ENCODE measurements at regions of chr1 and their contacts with region 1.

Region 1: GRCh38 chr1:28248283-28249012 is 10.9 kb upstream of the SESN2 start:
- DNase-seq: peak; percentile 95
- ATAC-seq: peak; percentile 31
- H3K4me3 Mint-ChIP-seq: peak overlapping the region; percentile 84
- H3K27ac Mint-ChIP-seq: peak overlapping the region; percentile 96
- H3K4me1 Mint-ChIP-seq: peaks cover 51% of the 10 kb centered on the region
- H3K27me3 Mint-ChIP-seq: no peaks in the 10 kb centered on the region
- CTCF ChIP-seq: peak; percentile 93

Region 2: DNA sequence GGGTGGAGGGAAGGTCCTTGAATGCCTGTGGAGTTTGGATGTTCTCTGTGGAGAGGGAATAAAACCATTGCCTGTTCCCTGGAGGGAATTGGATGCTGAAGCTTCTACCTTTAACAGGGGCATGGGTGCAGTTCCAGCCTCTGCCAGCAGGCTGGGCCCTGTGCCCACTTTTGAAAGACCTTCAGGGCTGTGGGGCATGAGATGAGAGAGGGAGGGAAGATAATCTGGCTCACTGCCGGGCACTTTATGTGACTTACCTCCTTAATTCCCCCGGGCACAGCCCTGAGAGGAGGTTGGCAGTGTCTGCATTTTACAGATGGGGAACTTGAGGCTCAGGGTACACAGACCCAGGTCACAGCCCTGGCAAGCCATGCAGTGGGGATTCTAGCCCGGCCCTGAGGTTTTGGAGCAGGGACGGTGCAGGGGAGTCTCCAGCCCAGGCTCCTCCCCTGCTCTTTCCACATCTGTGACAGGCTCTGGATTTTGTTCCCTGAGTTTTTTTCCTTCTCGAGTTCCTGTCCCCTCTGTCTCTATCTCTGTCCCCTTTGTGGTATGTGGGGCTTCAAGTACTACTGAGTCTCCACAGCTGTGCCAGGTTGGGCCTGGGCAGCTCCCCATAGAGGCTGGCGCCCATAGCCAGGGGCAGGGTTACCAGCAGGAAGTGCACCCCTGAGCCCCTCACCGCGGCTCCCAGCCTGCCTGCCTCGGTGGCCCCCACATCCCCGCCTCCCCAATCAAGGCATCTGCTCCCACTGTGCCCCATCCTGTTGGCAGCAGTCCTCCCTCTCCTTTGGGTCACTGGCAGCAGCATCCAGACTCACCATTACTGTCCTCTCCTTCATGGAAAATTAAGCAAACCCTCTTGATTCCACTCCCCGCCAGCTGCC is 390.1 kb before region 1 on chr1:
- CTCF ChIA-PET with region 1: no interaction called
- POLR2A ChIA-PET with region 1: no interaction called
- intact Hi-C with region 1: no loop called
- DNase-seq: peak; percentile 92
- ATAC-seq: peak; percentile 99
- H3K4me3 Mint-ChIP-seq: no peak overlapping the region
- H3K27ac Mint-ChIP-seq: no peak overlapping the region
- H3K4me1 Mint-ChIP-seq: peaks cover 9% of the 10 kb centered on the region
- H3K27me3 Mint-ChIP-seq: no peaks in the 10 kb centered on the region
- CTCF ChIP-seq: peak; percentile 99

Region 3: DNA sequence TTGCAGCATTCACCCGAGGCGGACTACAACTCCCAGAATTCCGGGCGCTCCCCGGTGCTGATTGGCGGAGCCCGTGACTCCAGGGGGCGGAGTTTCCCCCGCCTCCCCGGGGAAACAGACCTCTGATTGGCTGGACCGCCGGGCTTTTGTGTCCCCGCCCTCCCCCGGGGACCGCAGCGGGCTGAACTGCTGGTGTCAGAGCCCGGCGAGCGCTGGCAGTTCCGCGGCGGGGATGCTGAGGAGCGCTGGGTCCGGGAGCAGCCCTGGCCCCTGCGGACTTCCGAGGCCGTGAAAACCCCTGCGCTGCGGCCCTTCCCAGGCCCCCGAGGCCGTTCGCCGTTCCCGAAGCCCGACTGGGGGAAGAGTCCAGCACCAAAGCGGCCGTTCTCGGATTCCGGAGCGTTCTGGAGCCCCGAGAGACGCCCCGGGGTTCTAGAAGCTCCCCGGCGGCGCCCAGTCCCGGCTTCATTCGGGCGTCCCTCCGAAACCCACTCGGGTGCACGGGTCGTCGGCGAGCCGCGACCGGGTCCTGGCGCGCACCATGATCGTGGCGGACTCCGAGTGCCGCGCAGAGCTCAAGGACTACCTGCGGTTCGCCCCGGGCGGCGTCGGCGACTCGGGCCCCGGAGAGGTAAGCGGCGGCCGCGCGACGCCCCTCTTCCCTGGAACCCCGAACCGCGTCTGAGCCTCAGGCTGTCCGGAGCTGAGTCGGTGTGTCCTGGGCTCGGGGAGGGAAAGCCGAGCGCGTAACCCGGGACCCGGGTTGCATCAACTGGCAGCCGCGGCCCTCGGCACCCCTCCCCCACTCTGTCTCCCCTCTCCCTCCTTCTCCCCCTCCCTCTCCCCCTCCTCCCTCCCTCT is 11.1 kb after region 1 on chr1 and contains the start of gene SESN2:
- CTCF ChIA-PET with region 1: interaction called, 90 read pairs
- POLR2A ChIA-PET with region 1: interaction called, 137 read pairs
- intact Hi-C with region 1: no loop called
- DNase-seq: peak; percentile 100
- ATAC-seq: peak; percentile 94
- H3K4me3 Mint-ChIP-seq: peak within 1 kb of the TSS; percentile 83
- H3K27ac Mint-ChIP-seq: peak within 1 kb of the TSS; percentile 96
- H3K4me1 Mint-ChIP-seq: peaks cover 38% of the 10 kb centered on the region
- H3K27me3 Mint-ChIP-seq: no peaks in the 10 kb centered on the region
- CTCF ChIP-seq: no peak
- total RNA-seq, gene SESN2: 26.0 to 27.4 TPM

Region 4: DNA sequence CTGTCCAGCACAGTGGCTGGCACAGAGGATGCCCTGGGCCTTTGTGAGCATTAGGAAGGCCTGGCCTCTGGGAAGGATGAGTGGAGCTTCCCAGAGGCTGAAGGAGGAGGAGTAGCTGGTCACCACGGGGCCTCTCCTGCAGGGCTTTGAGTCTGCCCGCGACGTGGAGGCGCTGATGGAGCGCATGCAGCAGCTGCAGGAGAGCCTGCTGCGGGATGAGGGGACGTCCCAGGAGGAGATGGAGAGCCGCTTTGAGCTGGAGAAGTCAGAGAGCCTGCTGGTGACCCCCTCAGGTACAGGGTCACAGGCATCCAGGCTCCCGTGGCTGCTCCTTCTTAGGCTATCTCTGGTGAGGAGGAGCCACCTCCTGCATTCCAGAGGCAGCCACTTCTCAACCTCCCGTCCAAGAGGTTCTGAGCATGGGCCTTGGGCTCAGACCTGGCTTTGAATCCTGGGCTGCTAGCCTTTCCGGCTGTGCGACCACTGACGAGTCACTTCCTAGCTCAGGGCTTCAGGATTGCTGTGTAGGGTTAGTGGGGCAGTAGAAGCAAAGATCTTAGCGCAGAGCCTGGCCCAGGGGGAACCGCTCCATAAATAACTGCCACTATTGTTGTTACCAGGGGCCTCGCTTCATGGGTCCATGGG is 24.9 kb after region 1 on chr1:
- CTCF ChIA-PET with region 1: interaction called, 13 read pairs
- POLR2A ChIA-PET with region 1: interaction called, 4 read pairs
- intact Hi-C with region 1: no loop called
- DNase-seq: no peak
- ATAC-seq: no peak
- H3K4me3 Mint-ChIP-seq: no peak overlapping the region
- H3K27ac Mint-ChIP-seq: no peak overlapping the region
- H3K4me1 Mint-ChIP-seq: no peaks in the 10 kb centered on the region
- H3K27me3 Mint-ChIP-seq: no peaks in the 10 kb centered on the region
- CTCF ChIP-seq: no peak

Region 5: GRCh38 chr1:28359592-28360239 is 111.3 kb after region 1 on chr1:
- CTCF ChIA-PET with region 1: interaction called, 40 read pairs
- POLR2A ChIA-PET with region 1: no interaction called
- intact Hi-C with region 1: no loop called
- DNase-seq: peak; percentile 93
- ATAC-seq: peak; percentile 84
- H3K4me3 Mint-ChIP-seq: no peak overlapping the region
- H3K27ac Mint-ChIP-seq: no peak overlapping the region
- H3K4me1 Mint-ChIP-seq: peaks cover 2% of the 10 kb centered on the region
- H3K27me3 Mint-ChIP-seq: no peaks in the 10 kb centered on the region
- CTCF ChIP-seq: peak; percentile 80

Region 6: GRCh38 chr1:28482702-28483101 is 234.3 kb after region 1 on chr1:
- CTCF ChIA-PET with region 1: no interaction called
- POLR2A ChIA-PET with region 1: no interaction called
- intact Hi-C with region 1: no loop called
- DNase-seq: no peak
- ATAC-seq: no peak
- H3K4me3 Mint-ChIP-seq: no peak overlapping the region
- H3K27ac Mint-ChIP-seq: no peak overlapping the region
- H3K4me1 Mint-ChIP-seq: no peaks in the 10 kb centered on the region
- H3K27me3 Mint-ChIP-seq: no peaks in the 10 kb centered on the region
- CTCF ChIP-seq: no peak

Region 7: GRCh38 chr1:28505406-28506187 is 257.1 kb after region 1 on chr1 and contains the start of gene RCC1:
- CTCF ChIA-PET with region 1: no interaction called
- POLR2A ChIA-PET with region 1: interaction called, 91 read pairs
- intact Hi-C with region 1: loop called (anchors 5 kb)
- DNase-seq: peak; percentile 98
- ATAC-seq: peak; percentile 88
- H3K4me3 Mint-ChIP-seq: peak within 1 kb of the TSS; percentile 94
- H3K27ac Mint-ChIP-seq: peak within 1 kb of the TSS; percentile 95
- H3K4me1 Mint-ChIP-seq: peaks cover 26% of the 10 kb centered on the region
- H3K27me3 Mint-ChIP-seq: peaks cover 1% of the 10 kb centered on the region
- CTCF ChIP-seq: no peak
- total RNA-seq, gene RCC1: 108 to 113 TPM